GM12878 (cell line): ENCODE measurements at regions of chr17 and their contacts with region 1.

Region 1: DNA sequence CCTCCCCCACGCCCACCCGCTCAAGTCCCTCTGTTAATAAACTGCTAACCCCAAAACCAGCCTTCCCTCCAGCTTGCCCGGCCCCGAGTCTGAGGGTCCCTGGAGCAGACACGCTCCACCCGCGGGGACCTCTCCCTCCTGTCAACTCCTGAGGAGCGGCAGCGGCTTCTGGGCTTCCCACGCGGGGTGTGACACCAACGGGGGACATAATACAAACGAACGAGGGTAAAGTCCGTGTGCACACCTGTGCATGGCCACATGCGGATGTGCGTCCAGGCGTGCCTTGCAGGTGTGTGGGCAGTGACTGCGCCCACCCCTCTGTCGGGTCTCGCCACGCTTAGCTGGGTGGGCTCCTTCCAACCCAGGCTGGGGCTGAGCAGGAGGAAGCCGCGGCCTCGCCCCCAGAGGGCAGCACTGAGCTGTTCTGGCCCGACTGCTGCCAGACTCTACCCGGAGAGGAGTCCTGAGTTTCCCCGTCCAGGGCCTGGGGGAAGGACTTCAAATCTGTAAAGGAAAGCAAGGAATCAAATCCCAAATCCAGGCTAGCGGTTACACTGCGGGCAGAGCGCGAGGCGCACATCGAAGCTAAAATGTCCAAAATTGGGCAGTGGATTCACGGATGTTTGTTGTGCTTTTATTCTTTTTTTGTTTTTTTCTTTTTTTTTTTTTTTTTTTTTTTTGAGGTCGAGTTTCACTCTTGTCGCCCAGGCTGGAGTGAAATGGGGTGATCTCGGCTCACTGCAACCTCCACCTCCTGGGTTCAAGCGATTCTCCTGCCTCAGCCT is 24.2 kb upstream of the KRT17 start:
- DNase-seq: no peak
- ATAC-seq: peak; percentile 97
- H3K4me3 ChIP-seq: peak overlapping the region; percentile 57; the same call in 1 of the 2 replicates
- H3K27ac ChIP-seq: no peak overlapping the region
- H3K4me1 ChIP-seq: peaks cover 9% of the 10 kb centered on the region
- H3K27me3 ChIP-seq: no peaks in the 10 kb centered on the region
- CTCF ChIP-seq: peak; percentile 90 to 95 (median 91)
- EP300 ChIP-seq: no peak
- POLR2A ChIP-seq: no peak
- RAD21 ChIP-seq: peak; percentile 58

Region 2: DNA sequence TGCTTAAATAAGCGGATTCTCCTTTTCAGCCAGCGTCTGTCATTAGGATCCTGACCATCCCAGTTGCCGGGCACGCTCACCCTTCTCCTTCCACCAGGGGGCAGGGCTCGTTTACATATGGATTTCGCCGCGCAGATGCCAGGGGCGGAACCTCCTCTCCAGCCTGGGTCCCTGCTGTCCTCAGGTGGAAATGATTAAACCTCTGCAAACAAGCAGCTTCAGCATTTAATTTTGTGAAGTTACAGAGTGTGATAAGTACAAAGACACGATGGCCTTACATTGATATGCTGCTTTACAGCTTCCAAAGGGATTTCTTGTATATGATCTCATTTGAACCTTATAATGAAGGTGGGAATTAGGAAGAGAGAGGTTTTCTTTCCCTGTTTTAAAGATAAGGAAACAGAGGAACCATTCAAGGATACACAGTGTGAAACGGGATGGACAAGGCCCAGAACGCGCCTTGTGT is 845.0 kb before region 1 on chr17:
- CTCF ChIA-PET with region 1: interaction called, 4 read pairs
- POLR2A ChIA-PET with region 1: no interaction called
- RAD21 ChIA-PET with region 1: no interaction called
- SMC1A ChIA-PET with region 1: no interaction called
- in situ Hi-C with region 1: no loop called
- intact Hi-C with region 1: loop called (anchors 5 kb)
- DNase-seq: no peak
- ATAC-seq: peak; percentile 97
- H3K4me3 ChIP-seq: no peak overlapping the region
- H3K27ac ChIP-seq: no peak overlapping the region
- H3K4me1 ChIP-seq: no peaks in the 10 kb centered on the region
- H3K27me3 ChIP-seq: peaks cover 7 to 10% of the 10 kb centered on the region in 2 experiments
- CTCF ChIP-seq: peak; percentile 84 to 90 (median 86)
- EP300 ChIP-seq: no peak
- POLR2A ChIP-seq: no peak
- RAD21 ChIP-seq: peak; percentile 91

Region 3: GRCh38 chr17:40909351-40909750 is 739.3 kb before region 1 on chr17:
- CTCF ChIA-PET with region 1: interaction called, 14 read pairs
- POLR2A ChIA-PET with region 1: no interaction called
- RAD21 ChIA-PET with region 1: interaction called, 4 read pairs
- SMC1A ChIA-PET with region 1: interaction called, 11 read pairs
- in situ Hi-C with region 1: no loop called
- intact Hi-C with region 1: loop called (anchors 5 kb)
- DNase-seq: no peak
- ATAC-seq: peak; percentile 84
- H3K4me3 ChIP-seq: no peak overlapping the region
- H3K27ac ChIP-seq: no peak overlapping the region
- H3K4me1 ChIP-seq: 0 out of 2 replicates have a peak, but pooled peaks cover 2% of the 10 kb centered on the region
- H3K27me3 ChIP-seq: peaks cover 0 to 4% of the 10 kb centered on the region in 2 experiments; a peak in 1 of 4 replicates
- CTCF ChIP-seq: peak; percentile 56 to 72 (median 68)
- EP300 ChIP-seq: no peak
- POLR2A ChIP-seq: no peak
- RAD21 ChIP-seq: peak; percentile 79

Region 4: GRCh38 chr17:41659427-41660212 is 11.0 kb after region 1 on chr17:
- CTCF ChIA-PET with region 1: interaction called, 420 read pairs
- POLR2A ChIA-PET with region 1: interaction called, 4 read pairs
- RAD21 ChIA-PET with region 1: interaction called, 193 read pairs
- SMC1A ChIA-PET with region 1: interaction called, 62 read pairs
- in situ Hi-C with region 1: no loop called
- intact Hi-C with region 1: loop called (anchors 1 kb)
- DNase-seq: no peak
- ATAC-seq: no peak
- H3K4me3 ChIP-seq: no peak overlapping the region
- H3K27ac ChIP-seq: no peak overlapping the region
- H3K4me1 ChIP-seq: no peaks in the 10 kb centered on the region; the same call in 1 of the 2 replicates
- H3K27me3 ChIP-seq: no peaks in the 10 kb centered on the region; a peak in 1 of 4 replicates
- CTCF ChIP-seq: no peak
- EP300 ChIP-seq: no peak
- POLR2A ChIP-seq: no peak
- RAD21 ChIP-seq: no peak

Region 5: DNA sequence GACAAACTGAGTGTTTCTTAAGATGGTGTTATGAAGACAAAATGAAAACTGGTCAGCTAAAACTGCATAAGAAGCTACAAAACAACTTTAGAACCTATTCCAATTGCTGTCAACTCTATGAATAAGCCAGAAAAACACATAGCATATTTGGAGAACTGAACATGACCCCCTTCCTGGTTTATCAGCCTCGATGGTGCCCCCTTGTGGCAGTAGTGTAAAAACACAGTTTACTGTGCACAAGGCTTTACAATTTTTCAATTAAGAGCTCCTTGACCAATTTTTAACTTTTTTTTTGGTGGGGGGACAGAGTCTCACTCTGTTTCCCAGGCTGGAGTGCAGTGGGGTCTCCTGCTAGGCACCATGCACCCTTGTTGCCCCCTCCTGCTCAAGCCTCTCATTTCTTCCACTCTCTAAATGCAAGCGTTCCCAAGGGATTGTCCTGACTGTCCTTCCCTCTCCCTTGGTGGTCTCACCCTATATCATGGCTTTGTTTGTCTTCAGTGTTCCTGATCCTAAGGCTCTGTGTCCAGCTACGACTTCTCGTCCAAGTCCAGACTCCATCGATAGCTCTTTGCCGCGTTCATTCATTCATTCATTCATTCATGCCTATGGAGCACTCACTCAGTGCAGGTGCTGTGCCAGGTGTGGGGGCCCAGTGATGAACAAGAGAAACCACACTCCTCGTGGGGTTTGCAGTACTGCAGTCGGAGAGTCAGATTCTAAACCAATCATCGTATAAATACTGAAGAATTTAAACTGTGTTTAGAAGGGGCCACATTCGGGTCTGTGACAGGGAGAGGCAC is 47.6 kb after region 1 on chr17:
- CTCF ChIA-PET with region 1: interaction called, 12 read pairs
- POLR2A ChIA-PET with region 1: interaction called, 9 read pairs
- RAD21 ChIA-PET with region 1: interaction called, 7 read pairs
- SMC1A ChIA-PET with region 1: no interaction called
- in situ Hi-C with region 1: no loop called
- intact Hi-C with region 1: loop called (anchors 1 kb)
- DNase-seq: no peak
- ATAC-seq: peak; percentile 66
- H3K4me3 ChIP-seq: no peak overlapping the region
- H3K27ac ChIP-seq: no peak overlapping the region
- H3K4me1 ChIP-seq: peaks cover 2% of the 10 kb centered on the region; the same call in 1 of the 2 replicates
- H3K27me3 ChIP-seq: no peaks in the 10 kb centered on the region
- CTCF ChIP-seq: peak; percentile 73 to 91 (median 76)
- EP300 ChIP-seq: no peak
- POLR2A ChIP-seq: no peak
- RAD21 ChIP-seq: peak; percentile 59